HepG2 (cell line): ENCODE measurements at regions of chr16 and their contacts with region 1.

Region 1: DNA sequence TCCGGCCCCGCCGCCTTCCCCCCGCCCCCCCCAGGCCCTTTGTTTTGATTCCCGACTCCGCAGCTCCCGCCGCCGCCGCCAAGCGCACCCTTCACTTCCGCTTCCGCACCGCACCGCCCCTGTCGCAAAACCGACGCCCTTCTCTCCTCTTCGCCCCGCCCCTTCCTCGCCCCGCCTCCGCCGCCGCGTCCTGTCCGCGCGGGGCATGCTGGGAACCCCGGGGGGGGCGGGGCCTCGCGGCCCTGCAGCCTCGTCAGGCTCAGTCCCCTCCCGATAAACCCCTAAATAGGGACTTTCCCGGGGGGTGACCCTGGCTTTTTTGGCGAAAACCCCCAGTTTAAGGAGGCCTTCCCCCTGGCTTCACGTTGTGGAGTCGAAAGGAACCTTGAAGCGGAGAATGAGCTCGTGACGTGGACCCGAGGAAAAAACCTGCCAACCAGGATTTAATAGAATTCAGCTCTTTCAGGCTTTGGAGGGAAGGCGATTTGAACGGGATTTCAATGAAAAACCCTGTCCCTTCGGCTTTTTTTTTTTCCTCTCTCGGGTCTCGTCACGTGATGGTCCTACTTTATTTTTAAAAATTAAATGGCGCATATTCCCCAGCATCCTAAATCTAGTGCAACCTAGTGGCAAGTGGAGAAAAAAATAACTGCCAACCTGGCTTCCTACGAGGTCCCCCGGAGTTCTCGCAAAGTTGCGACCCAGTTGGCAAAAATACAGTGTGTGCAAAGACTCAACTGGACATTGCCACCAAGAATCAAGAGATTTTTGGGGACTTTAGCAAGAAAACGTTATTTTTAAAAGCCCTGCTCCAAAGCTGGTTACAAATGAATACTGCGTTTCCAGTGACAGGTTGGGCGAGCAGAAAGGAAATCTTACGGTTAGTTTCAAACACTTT is at the start of gene MARF1:
- DNase-seq: peak; percentile 96
- ATAC-seq: peak; percentile 60
- H3K4me3 ChIP-seq: peak within 1 kb of the TSS; percentile 77 to 99 (median 96)
- H3K27ac ChIP-seq: peak within 1 kb of the TSS; percentile 99
- H3K4me1 ChIP-seq: peaks cover 51% of the 10 kb centered on the region
- H3K27me3 ChIP-seq: no peaks in the 10 kb centered on the region; a peak in 1 of 5 replicates
- CTCF ChIP-seq: peak; percentile 60
- EP300 ChIP-seq: peak in 1 of 2 experiments; percentile 12; a peak in 2 of 4 replicates
- POLR2A ChIP-seq: peak; percentile 62 to 94
- RAD21 ChIP-seq: no peak
- total RNA-seq, gene MARF1: 8.7 and 12.6 TPM in 2 replicates

Region 2: DNA sequence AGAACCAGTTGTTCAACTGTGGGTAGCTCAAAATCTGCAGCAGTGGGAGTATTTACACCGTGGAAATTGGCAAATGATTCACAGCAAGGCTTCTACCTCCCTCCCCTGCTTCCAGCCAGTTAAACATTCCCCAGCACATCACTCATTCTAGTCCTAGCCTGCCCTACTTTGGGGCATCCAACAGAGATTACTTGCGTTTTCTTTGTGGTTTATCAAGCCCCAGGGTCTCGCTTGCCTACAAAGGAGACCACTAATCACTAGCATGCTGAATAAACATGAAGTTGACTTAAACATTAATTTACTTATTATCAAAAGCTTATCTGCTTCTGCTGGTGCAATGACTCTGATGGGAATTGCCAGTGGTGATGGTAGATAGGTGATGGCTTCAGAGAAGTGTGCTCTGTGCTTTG is 94.8 kb before region 1 on chr16:
- CTCF ChIA-PET with region 1: no interaction called
- POLR2A ChIA-PET with region 1: interaction called, 14 read pairs
- in situ Hi-C with region 1: no loop called
- intact Hi-C with region 1: loop called (anchors 1 kb)
- DNase-seq: peak; percentile 45
- ATAC-seq: peak; percentile 73
- H3K4me3 ChIP-seq: no peak overlapping the region
- H3K27ac ChIP-seq: no peak overlapping the region
- H3K4me1 ChIP-seq: peaks cover 43% of the 10 kb centered on the region
- H3K27me3 ChIP-seq: no peaks in the 10 kb centered on the region
- CTCF ChIP-seq: no peak
- EP300 ChIP-seq: no peak
- POLR2A ChIP-seq: no peak
- RAD21 ChIP-seq: no peak

Region 3: DNA sequence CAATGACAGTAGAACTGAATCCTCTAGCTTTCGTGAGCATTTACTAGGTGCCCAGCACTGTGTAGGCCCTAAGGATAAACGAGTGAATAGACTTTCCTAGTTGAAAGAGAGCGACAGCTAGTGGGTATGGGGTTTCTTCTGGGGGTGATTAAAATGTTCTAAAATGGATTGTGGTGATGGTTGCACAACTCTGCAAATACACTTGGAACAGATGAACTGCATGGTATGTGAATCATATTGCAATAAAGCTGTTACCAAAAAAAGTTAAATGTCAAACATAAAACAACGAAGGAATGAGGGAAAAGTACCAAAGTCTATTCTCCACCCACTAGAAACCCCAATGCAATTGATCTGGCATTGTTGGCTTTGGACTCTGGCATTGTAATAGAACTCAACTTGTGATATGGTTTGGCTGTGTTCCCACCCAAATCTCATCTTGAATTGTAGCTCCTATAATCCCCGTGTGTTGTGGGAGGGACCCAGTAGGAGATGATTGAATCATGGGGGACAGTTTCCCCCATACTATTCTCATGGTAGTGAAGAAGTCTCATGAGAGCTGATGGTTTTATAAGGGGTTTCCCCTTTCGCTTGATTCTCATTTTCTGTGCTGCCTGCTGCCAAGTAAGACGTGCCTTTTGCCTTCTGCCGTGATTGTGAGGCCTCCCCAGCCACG is 70.8 kb before region 1 on chr16:
- CTCF ChIA-PET with region 1: no interaction called
- POLR2A ChIA-PET with region 1: interaction called, 94 read pairs
- in situ Hi-C with region 1: no loop called
- intact Hi-C with region 1: loop called (anchors 5 kb)
- DNase-seq: peak; percentile 83
- ATAC-seq: peak; percentile 16
- H3K4me3 ChIP-seq: no peak overlapping the region
- H3K27ac ChIP-seq: peak overlapping the region; percentile 20
- H3K4me1 ChIP-seq: peaks cover 62% of the 10 kb centered on the region
- H3K27me3 ChIP-seq: no peaks in the 10 kb centered on the region
- CTCF ChIP-seq: no peak
- EP300 ChIP-seq: peak in 1 of 2 experiments; percentile 72; a peak in 1 of 4 replicates
- POLR2A ChIP-seq: no peak
- RAD21 ChIP-seq: no peak

Region 4: DNA sequence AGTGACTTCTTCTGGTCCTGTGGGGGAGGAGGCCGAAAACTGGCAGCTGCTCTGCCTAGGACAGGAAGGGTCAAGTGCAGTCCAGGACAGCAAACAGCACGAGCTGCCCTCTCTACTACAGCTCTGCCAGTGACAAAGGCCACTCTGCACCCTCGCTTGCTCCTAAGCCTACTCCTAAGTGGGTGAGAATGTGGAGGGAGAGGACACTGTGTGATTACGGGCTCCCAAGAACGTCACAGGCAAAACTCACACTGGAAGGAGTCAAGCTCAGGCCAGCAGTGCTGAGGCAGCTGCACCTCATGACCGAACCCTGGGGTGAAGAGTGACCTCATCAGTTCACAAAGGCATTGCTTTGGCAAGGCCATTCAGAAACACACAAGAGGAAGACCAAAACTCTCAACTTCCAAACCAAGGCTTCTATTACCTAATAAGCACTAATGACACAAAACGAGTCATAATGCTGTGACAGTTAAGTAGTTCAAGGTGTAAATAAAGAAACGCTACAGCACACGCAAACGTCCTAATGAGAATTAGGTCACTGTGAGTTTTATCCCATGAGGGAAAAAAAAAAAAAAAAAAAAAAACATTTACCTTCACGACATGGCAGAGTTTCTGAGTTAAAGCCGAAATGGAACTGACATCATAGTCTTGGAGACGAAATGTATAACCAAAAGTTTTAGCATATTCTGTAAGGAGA is 35.4 kb before region 1 on chr16:
- CTCF ChIA-PET with region 1: interaction called, 3 read pairs
- POLR2A ChIA-PET with region 1: interaction called, 89 read pairs
- in situ Hi-C with region 1: no loop called
- intact Hi-C with region 1: loop called (anchors 2 kb)
- DNase-seq: peak; percentile 67
- ATAC-seq: peak; percentile 67
- H3K4me3 ChIP-seq: no peak overlapping the region
- H3K27ac ChIP-seq: peak overlapping the region; percentile 58
- H3K4me1 ChIP-seq: peaks cover 66% of the 10 kb centered on the region
- H3K27me3 ChIP-seq: no peaks in the 10 kb centered on the region
- CTCF ChIP-seq: 0 out of 2 replicates have a peak, but pooled peaks have one; percentile 18
- EP300 ChIP-seq: no peak
- POLR2A ChIP-seq: no peak
- RAD21 ChIP-seq: no peak

Region 5: DNA sequence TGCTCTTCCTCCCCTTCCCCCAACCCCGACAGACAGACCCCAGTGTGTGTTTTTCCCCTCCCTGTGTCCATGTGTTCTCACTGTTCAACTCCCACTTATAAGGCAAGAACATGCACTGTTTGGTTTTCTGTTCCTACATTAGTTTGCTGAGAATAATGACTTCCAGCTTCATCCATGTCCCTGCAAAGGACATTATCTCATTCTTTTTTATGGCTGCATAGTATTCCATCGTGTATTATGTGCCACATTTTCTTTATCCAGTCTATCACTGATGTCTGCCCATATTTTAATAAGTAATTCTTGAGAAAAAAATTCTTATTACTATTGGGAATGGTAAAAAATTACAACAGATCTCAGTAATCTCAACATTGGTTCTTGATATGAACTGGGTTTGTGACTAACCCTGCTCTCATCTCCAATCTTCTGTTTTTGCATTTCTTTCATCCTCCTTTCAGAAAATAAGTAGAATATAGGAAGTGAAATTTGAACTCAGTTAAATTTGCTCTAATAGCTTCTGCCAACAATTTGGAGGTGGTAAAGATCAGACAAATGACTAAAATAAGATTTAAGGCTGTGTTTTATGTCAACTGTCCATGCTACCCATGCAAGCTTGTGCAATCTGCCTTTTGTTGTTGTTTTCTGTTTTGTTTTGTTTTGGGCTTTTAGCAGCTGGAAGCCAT is 11.4 kb before region 1 on chr16:
- CTCF ChIA-PET with region 1: no interaction called
- POLR2A ChIA-PET with region 1: interaction called, 121 read pairs
- in situ Hi-C with region 1: no loop called
- intact Hi-C with region 1: no loop called
- DNase-seq: no peak
- ATAC-seq: no peak
- H3K4me3 ChIP-seq: no peak overlapping the region
- H3K27ac ChIP-seq: no peak overlapping the region
- H3K4me1 ChIP-seq: peaks cover 36% of the 10 kb centered on the region
- H3K27me3 ChIP-seq: no peaks in the 10 kb centered on the region
- CTCF ChIP-seq: no peak
- EP300 ChIP-seq: no peak
- POLR2A ChIP-seq: no peak
- RAD21 ChIP-seq: no peak

Region 6: GRCh38 chr16:15665107-15665506 is 21.8 kb after region 1 on chr16:
- CTCF ChIA-PET with region 1: no interaction called
- POLR2A ChIA-PET with region 1: interaction called, 53 read pairs
- in situ Hi-C with region 1: no loop called
- intact Hi-C with region 1: no loop called
- DNase-seq: no peak
- ATAC-seq: no peak
- H3K4me3 ChIP-seq: no peak overlapping the region
- H3K27ac ChIP-seq: no peak overlapping the region
- H3K4me1 ChIP-seq: peaks cover 30% of the 10 kb centered on the region
- H3K27me3 ChIP-seq: no peaks in the 10 kb centered on the region
- CTCF ChIP-seq: no peak
- EP300 ChIP-seq: no peak
- POLR2A ChIP-seq: no peak
- RAD21 ChIP-seq: no peak

Region 7: GRCh38 chr16:15682105-15682570 is 38.8 kb after region 1 on chr16:
- CTCF ChIA-PET with region 1: interaction called, 7 read pairs
- POLR2A ChIA-PET with region 1: interaction called, 19 read pairs
- in situ Hi-C with region 1: no loop called
- intact Hi-C with region 1: loop called (anchors 1 kb)
- DNase-seq: peak; percentile 89
- ATAC-seq: peak; percentile 96
- H3K4me3 ChIP-seq: no peak overlapping the region
- H3K27ac ChIP-seq: peak overlapping the region; percentile 53
- H3K4me1 ChIP-seq: peaks cover 14% of the 10 kb centered on the region
- H3K27me3 ChIP-seq: no peaks in the 10 kb centered on the region
- CTCF ChIP-seq: peak; percentile 61
- EP300 ChIP-seq: no peak
- POLR2A ChIP-seq: no peak
- RAD21 ChIP-seq: peak; percentile 48; the same call in 1 of the 2 replicates

Region 8: GRCh38 chr16:15807603-15808009 is 164.3 kb after region 1 on chr16:
- CTCF ChIA-PET with region 1: no interaction called
- POLR2A ChIA-PET with region 1: no interaction called
- in situ Hi-C with region 1: no loop called
- intact Hi-C with region 1: no loop called
- DNase-seq: no peak
- ATAC-seq: peak; percentile 15; the same call in 2 of the 3 replicates
- H3K4me3 ChIP-seq: no peak overlapping the region
- H3K27ac ChIP-seq: no peak overlapping the region
- H3K4me1 ChIP-seq: peaks cover 4% of the 10 kb centered on the region; the same call in 1 of the 2 replicates
- H3K27me3 ChIP-seq: peaks cover 5 to 73% of the 10 kb centered on the region in 2 experiments; a peak in 4 of 5 replicates
- CTCF ChIP-seq: no peak
- EP300 ChIP-seq: no peak
- POLR2A ChIP-seq: no peak
- RAD21 ChIP-seq: no peak